ENCODE measurements at regions of chr11 and their contacts with region 1.

Region 1: DNA sequence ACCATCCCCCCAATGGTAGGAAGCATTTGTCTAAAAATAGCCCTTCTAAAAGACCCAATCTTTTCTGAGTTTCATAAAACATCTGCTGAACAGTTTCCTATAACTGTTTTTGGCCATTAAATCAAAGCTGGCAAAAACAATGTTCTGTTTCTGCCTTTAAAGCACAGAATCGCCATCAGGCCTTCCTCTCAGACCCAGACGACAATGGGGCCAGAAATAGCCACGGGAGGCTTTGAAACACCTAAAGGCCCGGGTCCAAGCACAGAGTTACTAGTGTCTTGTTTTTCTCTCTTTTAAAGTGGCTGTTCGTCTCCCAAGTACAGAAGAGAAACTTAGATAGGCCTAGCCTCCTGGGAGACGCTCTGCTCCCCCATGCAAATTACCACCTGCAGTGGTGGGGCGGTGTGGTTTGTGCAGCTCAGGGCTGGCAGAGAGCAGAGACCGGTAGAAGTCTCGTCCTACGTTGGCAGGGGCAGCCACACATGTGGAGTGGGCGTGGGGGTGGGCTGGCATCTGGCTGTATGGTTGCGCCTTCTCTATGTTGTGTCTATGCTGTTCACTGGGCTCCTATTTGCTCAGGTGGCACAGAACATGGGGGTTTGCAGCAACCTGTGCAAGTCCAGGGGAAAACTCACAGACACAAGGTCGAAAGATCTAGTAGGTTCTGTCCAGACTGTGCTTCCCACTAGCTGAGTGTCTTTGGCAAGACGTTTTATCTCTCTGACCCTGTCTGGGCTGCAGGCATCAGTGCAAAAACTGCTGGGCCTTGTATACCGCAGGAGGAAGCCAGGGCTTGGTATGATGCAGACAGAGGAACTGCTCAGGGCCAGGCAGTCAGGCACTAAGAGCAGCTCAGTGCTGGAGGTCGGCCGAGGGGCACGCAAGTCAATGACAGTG is 23.6 kb upstream of the ETS1 start:
- DNase-seq: peak; percentile 65
- H3K4me3 Mint-ChIP-seq: peak overlapping the region; percentile 42
- H3K27ac Mint-ChIP-seq: peak overlapping the region; percentile 85
- H3K4me1 Mint-ChIP-seq: peaks cover 44% of the 10 kb centered on the region
- H3K27me3 Mint-ChIP-seq: no peaks in the 10 kb centered on the region

Region 2: DNA sequence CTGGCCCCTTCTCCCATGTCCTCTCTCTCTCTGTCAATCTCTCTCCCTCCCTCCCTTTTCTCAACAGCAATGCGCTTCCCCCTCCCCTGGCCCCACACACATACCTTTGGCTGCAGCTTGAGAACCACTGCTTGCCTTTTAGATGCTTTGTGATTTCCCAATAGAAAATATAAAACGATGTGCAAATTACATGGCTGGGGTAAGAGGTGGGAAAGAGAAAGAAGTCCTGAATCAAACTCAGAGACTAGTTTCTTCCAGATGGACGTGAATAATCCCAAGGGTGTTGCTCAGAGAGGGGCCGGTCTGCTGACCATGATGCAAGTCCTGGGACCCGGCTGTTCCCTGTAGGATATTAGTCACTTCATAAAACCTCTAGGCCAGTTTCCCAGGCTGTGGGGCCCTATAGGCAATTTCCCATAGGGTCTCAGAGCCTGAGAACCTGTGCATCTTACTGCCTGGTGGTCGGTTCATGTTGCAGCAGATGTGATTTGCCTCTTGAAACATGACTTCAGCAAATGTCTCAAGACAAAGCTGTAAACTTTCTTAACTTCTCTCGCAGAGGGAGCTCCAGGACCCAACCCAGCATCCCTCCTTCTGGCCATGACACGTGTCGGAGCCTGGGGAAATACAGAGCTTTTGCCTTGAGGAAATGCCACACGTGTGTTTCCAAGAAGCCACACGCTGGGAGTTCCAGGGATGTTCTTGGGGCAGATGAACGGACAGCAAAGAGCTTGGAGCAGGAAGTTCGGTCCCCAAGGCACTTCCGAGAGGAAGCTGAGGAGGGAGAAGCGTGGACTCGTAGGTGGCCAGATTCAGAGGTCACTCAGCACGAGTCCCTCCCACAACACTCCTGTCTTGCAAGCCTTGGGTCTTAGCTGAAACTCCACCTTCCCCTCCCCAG is 10.9 kb after region 1 on chr11:
- CTCF ChIA-PET with region 1: interaction called, 14 read pairs
- POLR2A ChIA-PET with region 1: no interaction called
- DNase-seq: no peak
- H3K4me3 Mint-ChIP-seq: no peak overlapping the region
- H3K27ac Mint-ChIP-seq: no peak overlapping the region
- H3K4me1 Mint-ChIP-seq: peaks cover 76% of the 10 kb centered on the region
- H3K27me3 Mint-ChIP-seq: peaks cover 4% of the 10 kb centered on the region